ENCODE measurements at regions of chr13 and their contacts with region 1.

Region 1: DNA sequence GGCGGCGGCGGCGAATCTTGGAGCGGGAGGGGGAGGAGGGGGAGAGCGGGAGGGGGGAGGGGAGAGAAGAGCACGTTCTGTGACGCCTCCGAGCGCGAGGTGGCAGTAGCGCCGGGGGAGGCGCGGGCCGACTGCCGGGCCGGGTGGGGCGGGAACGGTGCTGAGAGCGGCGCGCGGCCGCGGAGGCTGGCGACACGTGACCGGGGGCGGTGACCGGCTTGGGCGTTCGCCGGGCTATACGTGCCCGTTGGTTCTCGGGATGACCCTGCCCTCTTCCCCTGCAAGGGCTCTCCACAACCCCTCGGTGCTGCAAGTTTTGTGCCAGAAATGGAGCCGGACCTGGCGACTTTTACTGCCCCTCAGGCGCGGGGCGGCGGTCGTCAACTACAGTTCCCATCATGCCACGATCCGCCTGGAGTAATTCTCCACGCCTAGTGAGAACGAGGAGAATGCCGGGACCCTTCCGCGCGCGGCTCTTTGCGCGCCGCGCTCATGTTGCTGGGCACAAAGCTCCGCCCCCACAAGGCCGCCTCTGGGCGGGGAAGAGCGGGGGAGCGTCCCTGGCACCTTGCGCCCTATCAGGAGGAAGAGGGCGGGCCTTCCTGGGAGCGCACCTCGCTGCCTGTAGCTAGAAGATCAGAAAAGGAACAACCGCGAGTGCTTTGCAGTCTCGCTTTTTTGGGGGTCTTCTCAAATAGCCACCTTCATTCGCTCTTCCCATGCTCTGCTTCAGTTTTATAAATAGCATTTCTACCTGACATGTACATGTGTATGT is at the start of gene KPNA3:
- DNase-seq: peak; percentile 89

Region 2: GRCh38 chr13:49560270-49561050 is 232.3 kb before region 1 on chr13:
- CTCF ChIA-PET with region 1: no interaction called
- POLR2A ChIA-PET with region 1: no interaction called
- DNase-seq: peak; percentile 14

Region 3: DNA sequence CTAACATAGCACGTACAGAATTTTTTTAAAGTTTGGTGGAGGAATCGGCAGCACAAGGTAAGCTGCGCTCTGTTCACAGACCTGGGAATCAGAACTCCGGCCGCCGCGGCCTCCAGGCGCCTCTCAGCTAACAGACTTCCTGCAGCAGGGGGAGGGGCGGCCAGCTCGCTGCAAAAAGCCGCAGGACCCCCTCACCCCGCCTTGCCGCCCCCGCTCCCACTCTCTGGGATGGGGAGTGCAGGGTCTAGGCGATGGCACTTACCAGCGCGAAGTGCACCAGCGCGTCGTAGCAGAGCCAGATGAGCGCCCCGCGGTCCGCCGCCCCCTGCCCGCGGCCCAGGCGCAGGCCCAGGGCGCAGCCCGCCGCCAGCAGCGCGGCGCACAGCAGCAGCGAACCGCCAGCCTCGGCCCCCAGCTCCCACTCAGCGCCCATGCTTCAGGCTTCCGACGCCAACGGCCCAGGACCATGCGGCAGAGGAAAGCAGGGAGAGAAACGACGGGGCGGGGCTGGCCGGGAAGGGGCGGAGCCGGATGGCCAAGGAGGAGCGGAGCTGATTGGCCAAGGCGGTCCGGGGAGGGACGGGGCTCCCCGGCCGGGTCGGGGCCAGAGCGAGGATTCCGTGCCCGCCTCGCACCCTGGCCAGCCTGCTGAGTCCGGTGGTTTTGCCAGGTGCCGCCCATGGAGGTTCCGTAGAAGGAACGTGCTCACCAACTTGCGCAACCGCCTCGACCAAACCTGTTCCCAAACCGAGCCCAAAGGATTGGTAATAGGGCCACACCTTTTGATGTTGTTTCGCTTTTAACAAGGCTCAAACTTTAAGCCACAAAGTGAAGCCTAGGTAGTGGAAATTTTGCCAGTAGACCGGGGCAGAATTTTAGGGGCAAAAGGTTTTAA is 101.5 kb before region 1 on chr13 and contains the start of gene EBPL:
- CTCF ChIA-PET with region 1: no interaction called
- POLR2A ChIA-PET with region 1: interaction called, 13 read pairs
- DNase-seq: peak; percentile 92

Region 4: GRCh38 chr13:49810567-49811526 is 18.1 kb after region 1 on chr13:
- CTCF ChIA-PET with region 1: no interaction called
- POLR2A ChIA-PET with region 1: interaction called, 21 read pairs
- DNase-seq: no peak

Measured in HEK293T (cell line).